Activated B cell treated with CpG ODN at 0.5 μM for 24 hours (primary cell): ENCODE measurements at regions of chr3 and their contacts with region 1.

Region 1: DNA sequence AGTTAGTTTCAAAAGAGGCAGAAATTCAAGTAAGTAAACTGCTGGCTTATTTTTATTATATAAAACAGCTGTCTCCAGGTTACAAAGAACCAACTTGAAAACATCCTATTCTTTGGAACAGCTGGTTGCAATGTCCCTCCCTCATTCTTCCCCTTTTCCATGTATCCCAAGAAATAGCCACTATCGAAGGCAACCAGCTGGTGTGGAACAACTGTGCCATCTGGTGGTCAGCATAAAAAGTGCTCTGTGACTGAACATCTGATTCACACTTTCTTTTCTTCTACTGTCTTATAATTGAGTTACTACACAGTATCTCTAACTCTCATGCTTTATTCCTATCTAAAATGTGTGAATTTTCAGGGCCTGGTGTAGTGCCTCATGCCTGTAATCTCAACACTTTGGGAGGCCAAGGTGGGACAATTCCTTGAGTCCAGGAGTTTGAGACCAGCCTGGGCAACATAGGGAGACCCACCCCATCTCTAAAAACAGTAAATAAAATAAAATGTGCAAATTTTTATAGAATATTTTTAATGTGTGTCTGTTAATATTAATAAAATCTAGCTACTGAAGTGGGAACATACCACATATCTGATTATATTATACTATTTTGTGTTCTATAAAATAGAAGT is 9.6 kb downstream of the OSBPL11 start:
- DNase-seq: no peak
- ATAC-seq: no peak
- H3K4me3 Mint-ChIP-seq: no peak overlapping the region
- H3K27ac Mint-ChIP-seq: no peak overlapping the region
- H3K4me1 Mint-ChIP-seq: peaks cover 34% of the 10 kb centered on the region
- H3K27me3 Mint-ChIP-seq: no peaks in the 10 kb centered on the region
- CTCF ChIP-seq: peak; percentile 59

Region 2: GRCh38 chr3:125437631-125438435 is 147.9 kb before region 1 on chr3:
- CTCF ChIA-PET with region 1: interaction called, 5 read pairs
- POLR2A ChIA-PET with region 1: no interaction called
- intact Hi-C with region 1: loop called (anchors 2 kb)
- DNase-seq: peak; percentile 42
- ATAC-seq: peak; percentile 57
- H3K4me3 Mint-ChIP-seq: no peak overlapping the region
- H3K27ac Mint-ChIP-seq: no peak overlapping the region
- H3K4me1 Mint-ChIP-seq: no peaks in the 10 kb centered on the region
- H3K27me3 Mint-ChIP-seq: no peaks in the 10 kb centered on the region
- CTCF ChIP-seq: peak; percentile 95

Region 3: DNA sequence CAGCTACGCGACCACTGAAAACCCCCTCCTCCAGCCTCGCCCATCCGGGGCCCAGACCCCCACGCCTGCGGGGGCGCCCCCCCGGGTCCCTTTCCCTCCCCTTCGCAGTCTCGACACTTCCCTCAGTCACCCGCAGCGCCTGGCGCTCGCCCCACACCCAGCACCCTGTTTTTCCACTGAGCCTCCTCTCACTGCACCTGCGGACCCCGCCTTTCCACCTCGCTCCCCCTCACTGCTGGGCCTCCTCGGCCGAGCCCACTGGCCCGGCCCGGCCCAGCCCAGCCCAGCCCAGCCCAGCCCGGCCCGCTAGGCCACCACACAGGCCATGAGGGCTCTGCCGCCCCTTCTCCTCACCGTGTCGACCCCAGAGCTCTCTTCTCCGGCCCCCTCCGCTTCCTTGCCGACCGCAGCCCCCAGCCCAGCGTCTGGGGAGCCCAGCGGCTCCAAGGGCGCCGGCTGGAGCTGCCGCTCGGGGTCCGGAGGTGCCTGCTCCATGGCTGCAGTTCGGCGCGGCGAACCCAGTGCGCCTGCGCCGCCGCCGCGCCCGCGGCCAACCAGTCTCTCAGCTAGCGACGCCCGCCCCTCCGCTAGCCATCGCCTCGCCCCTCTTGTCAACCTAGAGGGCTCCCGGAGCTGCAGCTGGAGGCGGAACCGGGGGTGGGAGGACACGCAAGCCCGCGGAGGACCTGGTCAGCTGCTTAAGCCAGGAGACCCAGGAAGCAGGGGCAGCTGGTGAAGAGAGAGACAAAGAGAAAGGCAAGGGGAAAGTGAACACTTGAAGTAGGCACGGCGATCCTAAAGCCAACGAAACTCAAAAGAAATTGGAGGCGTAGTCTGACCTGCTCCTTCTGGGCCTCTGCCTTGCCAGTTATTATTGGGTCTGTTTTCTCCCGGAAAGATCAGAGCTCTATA is 65.8 kb before region 1 on chr3 and contains the start of gene SNX4:
- CTCF ChIA-PET with region 1: interaction called, 10 read pairs
- POLR2A ChIA-PET with region 1: interaction called, 17 read pairs
- intact Hi-C with region 1: no loop called
- DNase-seq: peak; percentile 79
- ATAC-seq: peak; percentile 97
- H3K4me3 Mint-ChIP-seq: peak within 1 kb of the TSS; percentile 98
- H3K27ac Mint-ChIP-seq: peak within 1 kb of the TSS; percentile 92
- H3K4me1 Mint-ChIP-seq: peaks cover 39% of the 10 kb centered on the region
- H3K27me3 Mint-ChIP-seq: no peaks in the 10 kb centered on the region
- CTCF ChIP-seq: no peak
- total RNA-seq, gene SNX4: 28.2 and 30.2 TPM in 2 replicates